ENCODE measurements at regions of chr6 and their contacts with region 1.

Region 1: GRCh38 chr6:30130887-30131862 is 4.8 kb upstream of the TRIM40 start:
- DNase-seq: peak; percentile 74 to 80 (median 79)
- H3K4me3 ChIP-seq: no peak overlapping the region
- H3K4me3 Mint-ChIP-seq: peak overlapping the region in 5 of 8 donors; percentile 17 to 35 (median 21)
- H3K27ac ChIP-seq: no peak overlapping the region
- H3K27ac Mint-ChIP-seq: peak overlapping the region in 3 of 7 donors; percentile 0 to 33 (median 3)
- H3K4me1 ChIP-seq: peaks cover 7% of the 10 kb centered on the region
- H3K4me1 Mint-ChIP-seq: peaks cover 4 to 9% (median 5%) of the 10 kb centered on the region in 4 donors
- H3K27me3 ChIP-seq: peaks cover 34% of the 10 kb centered on the region
- H3K27me3 Mint-ChIP-seq: peaks cover 34 to 41% of the 10 kb centered on the region in 2 donors

Region 2: GRCh38 chr6:29924731-29925130 is 206.4 kb before region 1 on chr6:
- CTCF ChIA-PET with region 1: no interaction called
- POLR2A ChIA-PET with region 1: no interaction called
- intact Hi-C with region 1: no loop called
- DNase-seq: no peak
- H3K4me3 ChIP-seq: no peak overlapping the region
- H3K4me3 Mint-ChIP-seq: peak overlapping the region in 5 of 8 donors; percentile 36 to 70 (median 65)
- H3K27ac ChIP-seq: no peak overlapping the region
- H3K27ac Mint-ChIP-seq: peak overlapping the region in 5 of 7 donors; percentile 11 to 93 (median 84)
- H3K4me1 ChIP-seq: peaks cover 15% of the 10 kb centered on the region
- H3K4me1 Mint-ChIP-seq: peaks cover 0 to 28% (median 11%) of the 10 kb centered on the region in 4 donors
- H3K27me3 ChIP-seq: no peaks in the 10 kb centered on the region
- H3K27me3 Mint-ChIP-seq: no peaks in the 10 kb centered on the region

Region 3: DNA sequence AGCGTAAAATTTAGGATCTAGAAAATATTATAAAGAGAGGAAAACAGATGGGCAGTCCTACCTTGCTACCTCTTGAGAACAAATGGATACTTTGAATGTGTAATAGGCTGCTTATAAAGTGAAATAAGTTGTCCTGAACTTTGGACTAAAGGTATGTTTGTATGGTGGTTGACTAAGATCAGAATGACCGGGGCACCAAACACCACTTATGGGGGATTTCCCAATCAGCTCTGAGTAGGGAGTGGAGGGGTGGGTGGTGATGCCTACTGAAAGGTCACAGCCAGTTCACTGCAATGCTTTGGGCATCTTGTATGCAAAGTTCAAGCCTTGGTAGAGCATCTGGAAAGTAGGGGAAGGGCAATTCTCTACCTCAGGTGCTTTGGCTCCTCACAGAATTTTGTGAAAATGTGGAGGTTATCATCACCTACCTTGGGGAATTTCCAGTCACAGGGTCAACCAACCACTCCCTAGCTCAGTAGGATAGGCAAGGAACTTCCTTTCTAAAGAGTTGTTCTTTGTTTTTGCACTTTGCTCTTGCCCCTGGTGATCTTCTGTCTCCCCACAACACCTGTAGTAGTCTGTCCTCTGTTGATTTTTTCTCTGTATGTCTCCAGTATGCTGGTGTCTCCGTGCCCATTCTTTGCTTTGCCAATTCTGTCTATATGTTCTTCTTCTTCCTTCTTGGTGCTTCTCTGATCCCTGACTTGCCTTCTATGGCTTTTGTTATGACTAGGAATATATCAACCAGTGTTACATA is 18.0 kb before region 1 on chr6 and contains the start of gene TRIM31:
- CTCF ChIA-PET with region 1: interaction called, 17 read pairs
- POLR2A ChIA-PET with region 1: no interaction called
- intact Hi-C with region 1: no loop called
- DNase-seq: no peak
- H3K4me3 ChIP-seq: no peak within 1 kb of the TSS
- H3K4me3 Mint-ChIP-seq: no peak within 1 kb of the TSS
- H3K27ac ChIP-seq: no peak within 1 kb of the TSS
- H3K27ac Mint-ChIP-seq: no peak within 1 kb of the TSS
- H3K4me1 ChIP-seq: no peaks in the 10 kb centered on the region
- H3K4me1 Mint-ChIP-seq: peaks cover 0 to 6% (median 3%) of the 10 kb centered on the region in 4 donors
- H3K27me3 ChIP-seq: peaks cover 7% of the 10 kb centered on the region
- H3K27me3 Mint-ChIP-seq: peaks cover 30 to 39% of the 10 kb centered on the region in 2 donors
- total RNA-seq, gene TRIM31: 0.20 TPM in 1 of 2 experiments, not detected in the other

Region 4: DNA sequence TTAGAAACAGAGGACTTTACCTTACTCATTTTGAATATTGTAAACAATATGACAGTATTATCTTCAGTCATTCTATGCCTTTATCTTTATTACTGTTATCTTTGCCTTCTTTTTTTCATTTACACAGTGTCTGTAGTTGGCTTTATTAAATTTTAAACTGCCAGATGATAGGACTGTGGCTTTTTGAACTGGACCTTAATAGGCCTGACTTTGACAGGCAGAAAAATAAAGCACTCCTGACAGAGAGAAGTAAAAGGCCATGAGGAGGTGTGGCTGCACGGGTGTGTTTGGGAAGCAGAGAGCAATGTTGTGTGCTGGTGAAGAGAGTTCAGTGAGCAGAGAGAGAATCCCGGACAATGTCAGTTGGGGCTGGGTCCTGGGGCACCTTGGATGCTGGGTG is 12.6 kb after region 1 on chr6:
- CTCF ChIA-PET with region 1: interaction called, 32 read pairs
- POLR2A ChIA-PET with region 1: no interaction called
- intact Hi-C with region 1: no loop called
- DNase-seq: no peak
- H3K4me3 ChIP-seq: no peak overlapping the region
- H3K4me3 Mint-ChIP-seq: no peak overlapping the region
- H3K27ac ChIP-seq: no peak overlapping the region
- H3K27ac Mint-ChIP-seq: no peak overlapping the region
- H3K4me1 ChIP-seq: no peaks in the 10 kb centered on the region
- H3K4me1 Mint-ChIP-seq: no peaks in the 10 kb centered on the region
- H3K27me3 ChIP-seq: peaks cover 6% of the 10 kb centered on the region
- H3K27me3 Mint-ChIP-seq: peaks cover 35 to 41% of the 10 kb centered on the region in 2 donors

Region 5: GRCh38 chr6:30150671-30151395 is 19.7 kb after region 1 on chr6:
- CTCF ChIA-PET with region 1: interaction called, 11 read pairs
- POLR2A ChIA-PET with region 1: no interaction called
- intact Hi-C with region 1: no loop called
- DNase-seq: no peak
- H3K4me3 ChIP-seq: no peak overlapping the region
- H3K4me3 Mint-ChIP-seq: no peak overlapping the region
- H3K27ac ChIP-seq: no peak overlapping the region
- H3K27ac Mint-ChIP-seq: peak overlapping the region in 1 of 7 donors; percentile 61
- H3K4me1 ChIP-seq: no peaks in the 10 kb centered on the region
- H3K4me1 Mint-ChIP-seq: peaks cover 0 to 3% (median 0%) of the 10 kb centered on the region in 4 donors
- H3K27me3 ChIP-seq: no peaks in the 10 kb centered on the region
- H3K27me3 Mint-ChIP-seq: peaks cover 19 to 50% of the 10 kb centered on the region in 2 donors

Region 6: GRCh38 chr6:30955367-30956042 is 824.3 kb after region 1 on chr6:
- CTCF ChIA-PET with region 1: no interaction called
- POLR2A ChIA-PET with region 1: no interaction called
- intact Hi-C with region 1: no loop called
- DNase-seq: peak; percentile 54 to 71 (median 70)
- H3K4me3 ChIP-seq: peak overlapping the region; percentile 31 to 53
- H3K4me3 Mint-ChIP-seq: peak overlapping the region; percentile 84 to 91 (median 86)
- H3K27ac ChIP-seq: peak overlapping the region; percentile 29
- H3K27ac Mint-ChIP-seq: peak overlapping the region; percentile 46 to 91 (median 89)
- H3K4me1 ChIP-seq: peaks cover 20% of the 10 kb centered on the region
- H3K4me1 Mint-ChIP-seq: peaks cover 7 to 26% (median 19%) of the 10 kb centered on the region in 4 donors
- H3K27me3 ChIP-seq: no peaks in the 10 kb centered on the region
- H3K27me3 Mint-ChIP-seq: peaks cover 9 to 11% of the 10 kb centered on the region in 2 donors